Left colon (tissue), 2 donors: ENCODE measurements at regions of chr5 and their contacts with region 1.

Region 1: DNA sequence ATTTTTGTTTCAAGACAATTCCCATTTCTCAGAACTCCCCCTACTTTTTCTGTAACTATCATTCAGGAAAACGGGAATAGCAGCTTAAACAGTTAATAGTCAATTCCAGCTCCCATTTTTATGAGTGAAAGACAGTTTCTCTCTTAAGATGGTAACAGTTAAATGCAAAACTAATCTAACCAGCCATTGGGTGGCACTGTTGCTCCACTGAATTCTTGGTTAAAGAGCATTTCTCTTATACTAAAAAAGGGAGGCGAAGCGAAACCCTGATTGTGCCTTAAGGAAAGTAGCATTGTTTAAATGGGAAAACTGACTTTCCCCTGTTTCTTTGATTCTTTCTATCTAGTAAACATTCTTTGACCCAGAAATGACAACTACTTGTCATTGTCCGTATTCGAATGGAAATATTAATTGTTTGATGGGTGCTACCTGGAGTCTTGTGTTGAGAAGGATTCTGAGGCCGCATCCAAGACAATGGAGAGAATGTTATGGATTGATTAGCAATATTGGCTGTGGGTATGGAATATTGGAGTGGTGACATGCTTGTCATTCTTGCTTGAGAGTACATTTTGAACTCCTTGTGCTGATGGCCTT is 507.8 kb downstream of the MAT2B start:
- DNase-seq: peak in 1 of 2 donors; percentile 53
- ATAC-seq: peak; percentile 57

Region 2: DNA sequence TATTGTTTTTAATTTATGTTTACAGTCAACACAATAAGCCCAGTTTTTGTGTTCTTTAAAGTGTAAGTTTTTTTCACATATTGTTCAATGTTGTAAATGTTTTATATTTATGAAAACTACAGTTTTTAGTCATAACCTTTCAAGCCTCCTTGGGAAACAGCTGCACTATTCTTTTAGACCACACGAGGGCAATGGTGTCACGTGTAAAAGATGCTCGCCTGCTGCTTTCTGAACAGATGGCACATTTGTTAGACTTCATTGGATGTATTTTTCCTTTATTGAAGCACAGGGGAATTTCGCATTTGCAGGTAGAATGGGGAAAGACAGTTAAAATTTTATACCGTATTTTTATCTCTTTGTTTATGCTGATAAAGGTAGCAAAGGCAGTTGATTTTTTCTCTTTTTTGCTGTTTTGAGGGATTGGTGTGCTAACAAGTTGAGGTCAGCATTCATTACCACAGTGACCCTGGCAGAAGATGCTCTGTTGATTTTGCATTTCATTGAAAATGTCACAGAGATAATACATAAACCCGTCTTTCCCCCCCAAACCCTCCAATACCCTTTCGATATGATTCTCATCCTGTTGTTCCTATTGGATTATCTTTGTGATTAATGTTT is 448.7 kb before region 1 on chr5:
- intact Hi-C with region 1: loop called in 1 of 2 experiments (anchors 10 kb)
- DNase-seq: peak; percentile 27 to 56
- ATAC-seq: peak; percentile 61

Region 3: GRCh38 chr5:163855754-163856153 is 157.4 kb before region 1 on chr5:
- intact Hi-C with region 1: no loop called
- DNase-seq: no peak
- ATAC-seq: no peak

Region 4: GRCh38 chr5:165209086-165209727 is 1196.0 kb after region 1 on chr5:
- intact Hi-C with region 1: loop called in 1 of 2 experiments (anchors 10 kb)
- DNase-seq: no peak
- ATAC-seq: no peak